ENCODE measurements at regions of chr3 and their contacts with region 1.

Region 1: GRCh38 chr3:170307671-170308403 is 49.7 kb upstream of the SKIL start:
- DNase-seq: peak; percentile 23
- H3K4me3 ChIP-seq: no peak overlapping the region
- H3K27ac ChIP-seq: peak overlapping the region; percentile 21
- H3K27me3 ChIP-seq: no peaks in the 10 kb centered on the region
- CTCF ChIP-seq: no peak

Region 2: GRCh38 chr3:170368921-170369320 is 61.1 kb after region 1 on chr3:
- CTCF ChIA-PET with region 1: interaction called, 12 read pairs
- POLR2A ChIA-PET with region 1: no interaction called
- DNase-seq: no peak
- H3K4me3 ChIP-seq: no peak overlapping the region
- H3K27ac ChIP-seq: no peak overlapping the region
- H3K27me3 ChIP-seq: no peaks in the 10 kb centered on the region
- CTCF ChIP-seq: peak; percentile 48

Region 3: GRCh38 chr3:170848292-170848917 is 540.6 kb after region 1 on chr3:
- CTCF ChIA-PET with region 1: interaction called, 23 read pairs
- POLR2A ChIA-PET with region 1: no interaction called
- DNase-seq: no peak
- H3K4me3 ChIP-seq: no peak overlapping the region
- H3K27ac ChIP-seq: no peak overlapping the region
- H3K27me3 ChIP-seq: no peaks in the 10 kb centered on the region
- CTCF ChIP-seq: peak; percentile 50

Measured in AG04450 (cell line).